Mammary epithelial cell (primary cell): ENCODE measurements at regions of chr6 and their contacts with region 1.

Region 1: DNA sequence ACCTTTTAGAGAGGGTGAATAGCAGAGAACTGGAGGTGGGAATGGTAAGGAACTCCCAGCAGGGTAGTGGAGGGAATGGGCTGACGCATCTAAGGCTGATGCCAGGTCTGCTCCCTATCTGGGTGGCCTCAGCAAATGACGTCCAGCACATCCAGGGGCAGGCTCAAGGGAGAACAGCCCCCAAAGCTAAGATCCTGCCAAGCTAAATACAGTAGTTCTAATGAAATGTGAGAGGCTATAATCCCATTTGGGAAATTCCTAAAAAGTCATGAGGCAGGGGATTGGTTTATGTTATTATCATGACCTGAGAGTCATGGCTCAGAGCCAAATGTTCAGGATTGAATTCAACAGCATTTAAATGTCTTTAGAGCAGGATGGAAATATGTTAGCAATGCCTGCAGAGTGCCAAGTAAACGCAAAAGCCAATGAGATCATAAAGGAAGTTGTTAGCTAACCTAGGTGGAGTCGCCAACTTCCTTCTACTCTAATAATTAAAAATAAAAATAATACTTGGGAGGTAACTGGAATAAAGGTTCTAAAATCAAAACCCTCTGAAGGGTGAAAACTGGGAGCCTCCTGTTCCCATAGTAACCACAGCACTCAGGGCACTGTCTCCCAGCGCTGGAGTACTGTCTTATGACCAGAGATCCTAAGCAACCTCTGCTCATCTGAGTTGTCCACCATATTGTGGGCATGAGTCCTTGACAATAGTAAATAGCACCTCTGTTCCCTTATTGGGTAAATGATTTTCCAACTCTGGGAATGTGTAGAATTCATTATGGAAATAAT is 34.8 kb downstream of the IYD start:
- DNase-seq: peak; percentile 77
- H3K4me3 ChIP-seq: no peak overlapping the region
- H3K27ac ChIP-seq: no peak overlapping the region
- H3K4me1 ChIP-seq: peaks cover 9% of the 10 kb centered on the region
- H3K27me3 ChIP-seq: no peaks in the 10 kb centered on the region
- CTCF ChIP-seq: no peak

Region 2: DNA sequence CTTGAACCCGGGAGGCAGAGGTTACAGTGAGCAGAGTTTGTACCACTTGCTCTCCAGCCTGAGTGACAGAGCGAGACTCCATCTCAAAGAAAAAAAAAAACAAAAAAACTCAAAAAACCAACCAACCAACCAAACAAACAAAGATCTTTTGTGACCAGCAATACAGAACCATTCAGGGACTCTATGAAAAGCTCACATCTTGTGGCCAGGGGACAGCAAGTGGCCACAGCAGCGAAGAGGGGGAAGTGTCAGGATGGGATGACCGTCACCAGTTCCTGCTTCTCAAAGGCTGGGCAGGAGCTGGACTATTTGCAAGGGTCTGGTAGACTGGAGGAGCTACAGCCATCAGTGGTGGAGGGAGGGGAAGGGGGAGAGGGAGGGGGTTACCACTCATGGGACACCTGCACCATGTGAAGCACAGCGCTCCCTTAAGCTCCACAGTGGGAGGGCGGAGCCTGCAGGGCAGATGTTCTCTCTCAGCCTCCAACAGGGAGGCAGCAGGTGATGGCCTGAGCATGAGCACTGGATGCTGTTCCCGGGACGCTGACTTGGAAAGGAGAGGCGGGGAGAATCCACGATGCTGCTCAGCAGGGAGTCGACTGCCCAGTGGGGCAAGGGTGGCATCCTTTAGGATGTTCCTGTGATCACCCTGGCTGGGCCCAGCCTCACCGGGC is 315.0 kb before region 1 on chr6:
- CTCF ChIA-PET with region 1: no interaction called
- dilution Hi-C with region 1: no loop called
- in situ Hi-C with region 1: loop called in 1 of 2 experiments (anchors 5 kb)
- intact Hi-C with region 1: no loop called
- DNase-seq: no peak
- H3K4me3 ChIP-seq: no peak overlapping the region
- H3K27ac ChIP-seq: no peak overlapping the region
- H3K4me1 ChIP-seq: peaks cover 14% of the 10 kb centered on the region
- H3K27me3 ChIP-seq: no peaks in the 10 kb centered on the region
- CTCF ChIP-seq: no peak

Region 3: GRCh38 chr6:150169609-150170008 is 234.0 kb before region 1 on chr6:
- CTCF ChIA-PET with region 1: no interaction called
- dilution Hi-C with region 1: no loop called
- in situ Hi-C with region 1: no loop called
- intact Hi-C with region 1: no loop called
- DNase-seq: peak; percentile 92
- H3K4me3 ChIP-seq: no peak overlapping the region
- H3K27ac ChIP-seq: peak overlapping the region; percentile 46
- H3K4me1 ChIP-seq: peaks cover 21% of the 10 kb centered on the region
- H3K27me3 ChIP-seq: no peaks in the 10 kb centered on the region
- CTCF ChIP-seq: no peak